Esophagus muscularis mucosa (tissue), 4 donors: ENCODE measurements at regions of chr4 and their contacts with region 1.

Region 1: DNA sequence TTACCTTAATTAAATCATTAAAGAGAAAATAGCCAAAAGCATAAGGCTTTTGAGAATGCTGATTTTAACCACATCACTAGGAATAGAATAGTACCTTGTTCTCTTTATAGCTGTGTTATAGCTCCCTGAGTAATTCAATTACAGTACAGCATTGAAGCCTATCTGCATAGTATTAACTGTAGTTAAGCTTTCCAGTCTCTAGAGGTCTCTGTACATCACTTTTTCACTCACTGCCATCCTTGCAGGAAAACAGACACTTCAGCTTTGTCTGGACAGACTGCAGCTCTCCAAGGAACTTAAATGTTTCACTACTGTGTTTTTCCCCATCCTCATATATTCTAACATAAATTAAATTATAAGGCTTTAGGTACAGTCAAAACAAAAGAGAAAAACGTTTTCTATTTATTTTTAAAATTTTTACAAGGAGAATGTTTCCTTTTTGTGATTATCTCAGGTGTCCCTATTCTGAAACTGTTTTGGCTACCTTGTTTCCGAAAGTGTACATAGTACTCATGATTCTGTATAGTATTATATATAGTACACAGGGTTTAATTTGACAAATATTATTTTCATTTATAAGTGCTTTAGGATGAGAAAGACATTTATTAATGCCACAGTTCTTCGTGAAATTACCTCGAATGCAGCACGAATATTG is 407.9 kb downstream of the PCDH18 start:
- DNase-seq: no peak
- H3K4me3 ChIP-seq: peak overlapping the region; percentile 33 to 42 (median 38)
- H3K27ac ChIP-seq: no peak overlapping the region
- H3K4me1 ChIP-seq: no peaks in the 10 kb centered on the region
- H3K27me3 ChIP-seq: no peaks in the 10 kb centered on the region
- CTCF ChIP-seq: peak; percentile 66 to 70 (median 68)
- EP300 ChIP-seq: no peak
- POLR2A ChIP-seq: no peak

Region 2: DNA sequence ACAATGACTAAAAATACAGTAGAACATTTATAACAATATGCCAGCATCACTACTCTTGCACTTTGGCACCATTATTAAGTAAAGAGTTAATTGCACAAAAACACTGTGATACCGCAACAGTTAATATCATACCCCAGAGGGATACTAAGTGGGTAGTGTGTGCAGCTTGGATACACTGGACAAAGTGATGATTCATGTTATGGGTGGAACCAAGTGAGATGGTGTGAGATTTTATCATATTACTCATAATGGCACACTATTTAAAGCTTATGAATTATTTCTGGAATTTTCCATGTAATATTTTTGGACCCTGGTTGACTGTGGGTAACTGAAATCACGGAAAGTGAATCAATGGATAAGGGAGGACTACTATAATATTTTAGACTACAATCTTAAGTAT is 142.6 kb after region 1 on chr4:
- intact Hi-C with region 1: no loop called
- DNase-seq: no peak
- H3K4me3 ChIP-seq: no peak overlapping the region
- H3K27ac ChIP-seq: no peak overlapping the region
- H3K4me1 ChIP-seq: peaks cover 0 to 4% (median 0%) of the 10 kb centered on the region in 4 donors
- H3K27me3 ChIP-seq: no peaks in the 10 kb centered on the region
- CTCF ChIP-seq: no peak
- EP300 ChIP-seq: no peak
- POLR2A ChIP-seq: no peak

Region 3: GRCh38 chr4:137524725-137525369 is 400.4 kb after region 1 on chr4:
- intact Hi-C with region 1: loop called (anchors 10 kb)
- DNase-seq: no peak
- H3K4me3 ChIP-seq: peak overlapping the region in 2 of 4 donors; percentile 5 to 12
- H3K27ac ChIP-seq: peak overlapping the region; percentile 40 to 86 (median 60)
- H3K4me1 ChIP-seq: peaks cover 10 to 60% (median 46%) of the 10 kb centered on the region in 4 donors
- H3K27me3 ChIP-seq: no peaks in the 10 kb centered on the region
- CTCF ChIP-seq: no peak
- EP300 ChIP-seq: no peak
- POLR2A ChIP-seq: no peak

Region 4: GRCh38 chr4:137861682-137862081 is 737.3 kb after region 1 on chr4:
- intact Hi-C with region 1: loop called (anchors 2 kb)
- DNase-seq: no peak
- H3K4me3 ChIP-seq: no peak overlapping the region
- H3K27ac ChIP-seq: no peak overlapping the region
- H3K4me1 ChIP-seq: no peaks in the 10 kb centered on the region
- H3K27me3 ChIP-seq: no peaks in the 10 kb centered on the region
- CTCF ChIP-seq: peak; percentile 56 to 61 (median 58)
- EP300 ChIP-seq: no peak
- POLR2A ChIP-seq: no peak

Region 5: DNA sequence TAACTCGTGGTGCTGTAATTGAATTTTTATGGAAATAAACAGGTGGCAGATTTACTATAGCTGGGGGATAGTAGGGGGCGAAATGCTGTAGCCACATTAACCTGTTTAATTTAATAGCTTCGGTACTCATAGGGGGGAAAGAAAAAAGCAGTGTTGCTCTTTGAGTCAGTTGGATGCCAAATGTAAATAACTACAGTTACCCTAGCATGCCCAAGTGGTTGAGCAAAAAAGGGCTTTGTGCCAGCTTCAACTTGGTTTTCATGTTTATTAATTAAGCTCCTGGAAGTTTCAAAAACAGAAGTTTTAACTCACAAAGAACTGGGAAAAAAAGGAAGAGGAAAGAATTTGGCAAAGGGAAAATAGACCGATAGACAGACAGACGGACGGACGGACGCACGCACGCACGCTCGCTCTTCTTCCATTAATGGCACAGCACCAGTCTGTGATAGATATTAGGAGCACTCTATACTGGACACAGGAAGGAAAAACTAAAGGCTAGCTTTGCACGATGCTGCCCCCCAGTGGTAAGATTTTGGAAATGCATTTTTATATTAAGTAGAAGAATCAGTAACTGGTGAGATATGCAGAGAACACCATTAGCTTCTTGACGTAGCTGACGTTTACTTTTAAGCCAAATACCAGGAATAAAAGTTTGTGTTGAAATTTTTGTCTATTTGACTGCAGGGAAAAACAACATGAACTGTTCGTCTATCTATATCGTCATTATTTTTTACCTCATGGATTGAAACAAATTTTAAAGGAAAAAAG is 965.9 kb after region 1 on chr4:
- intact Hi-C with region 1: loop called (anchors 5 kb)
- DNase-seq: no peak
- H3K4me3 ChIP-seq: peak overlapping the region; percentile 29 to 47 (median 34)
- H3K27ac ChIP-seq: no peak overlapping the region
- H3K4me1 ChIP-seq: peaks cover 7 to 29% (median 16%) of the 10 kb centered on the region in 4 donors
- H3K27me3 ChIP-seq: no peaks in the 10 kb centered on the region
- CTCF ChIP-seq: peak; percentile 69 to 86 (median 84)
- EP300 ChIP-seq: no peak
- POLR2A ChIP-seq: no peak

Region 6: GRCh38 chr4:138680989-138681604 is 1556.7 kb after region 1 on chr4:
- intact Hi-C with region 1: loop called (anchors 5 kb)
- DNase-seq: peak; percentile 95
- H3K4me3 ChIP-seq: no peak overlapping the region
- H3K27ac ChIP-seq: no peak overlapping the region
- H3K4me1 ChIP-seq: peaks cover 0 to 9% (median 8%) of the 10 kb centered on the region in 4 donors
- H3K27me3 ChIP-seq: no peaks in the 10 kb centered on the region
- CTCF ChIP-seq: peak; percentile 90 to 96 (median 94)
- EP300 ChIP-seq: no peak
- POLR2A ChIP-seq: no peak

Region 7: GRCh38 chr4:138870737-138871554 is 1746.5 kb after region 1 on chr4:
- intact Hi-C with region 1: loop called (anchors 10 kb)
- DNase-seq: no peak
- H3K4me3 ChIP-seq: no peak overlapping the region
- H3K27ac ChIP-seq: no peak overlapping the region
- H3K4me1 ChIP-seq: peaks cover 5 to 11% (median 8%) of the 10 kb centered on the region in 4 donors
- H3K27me3 ChIP-seq: no peaks in the 10 kb centered on the region
- CTCF ChIP-seq: peak; percentile 84 to 90 (median 89)
- EP300 ChIP-seq: no peak
- POLR2A ChIP-seq: no peak